ENCODE measurements at regions of chr9 and their contacts with region 1.

Region 1: DNA sequence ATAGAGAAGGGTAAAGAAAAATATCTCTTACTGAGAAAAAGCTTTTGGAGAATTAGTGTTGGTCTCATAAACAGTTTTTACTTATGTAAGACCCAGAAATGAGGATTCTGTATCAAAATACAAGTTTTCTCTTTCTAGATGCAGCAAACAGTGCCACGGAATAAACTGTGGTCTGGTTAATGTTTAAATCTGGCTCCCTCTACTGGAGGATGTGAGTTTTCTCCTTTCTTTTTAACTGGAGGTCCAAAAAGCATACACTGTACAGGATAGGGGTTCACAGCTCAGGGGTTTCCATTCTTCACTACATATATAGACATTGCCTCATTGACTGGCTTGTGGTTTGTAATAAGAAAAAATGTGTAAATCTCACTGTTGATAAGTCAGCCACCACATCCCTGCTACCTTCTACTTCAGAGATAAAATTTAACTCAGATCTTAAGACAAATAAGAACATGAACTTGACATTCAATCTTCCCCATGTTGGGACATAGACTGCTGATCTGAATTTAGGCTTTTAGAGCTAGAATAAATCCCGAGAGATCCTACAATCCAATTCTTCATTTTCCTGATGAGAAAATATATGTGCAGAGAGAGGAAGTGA is 98.9 kb downstream of the CFAP95 start:
- DNase-seq: no peak
- H3K4me3 ChIP-seq: no peak overlapping the region
- CTCF ChIP-seq: peak; percentile 54

Region 2: DNA sequence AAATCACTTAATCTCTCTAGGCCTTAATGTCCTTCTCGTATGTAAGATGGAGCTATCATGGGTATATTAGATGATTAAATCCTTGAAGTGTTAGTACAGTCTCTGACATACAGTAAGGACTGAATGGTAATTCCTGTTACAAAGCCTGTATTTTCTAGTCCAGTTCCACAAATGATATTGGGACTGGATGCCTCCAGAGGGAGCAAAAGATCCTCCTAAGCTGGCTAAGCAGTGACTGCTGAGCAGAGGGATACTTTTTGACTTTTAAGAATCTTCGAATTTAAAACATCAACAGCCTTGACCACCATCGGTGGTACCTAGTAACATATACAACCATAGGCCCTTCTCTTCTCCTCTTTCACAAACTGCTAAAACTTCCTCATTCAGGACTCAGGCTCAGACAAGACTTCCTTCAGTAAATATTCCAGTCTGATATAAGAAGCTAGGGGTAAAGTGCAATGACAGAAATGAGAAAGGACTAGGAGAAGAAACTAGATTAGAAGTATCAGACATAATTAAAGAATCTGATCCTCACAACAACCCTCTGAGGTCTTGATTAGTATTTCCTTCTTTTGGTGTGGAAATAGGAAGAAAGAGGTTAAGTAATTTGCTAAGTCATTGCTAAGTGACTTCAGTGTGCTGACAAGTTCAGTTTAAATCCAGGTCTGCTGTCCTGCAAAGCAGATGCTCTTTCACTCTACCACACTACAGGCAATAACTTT is 173.7 kb before region 1 on chr9:
- CTCF ChIA-PET with region 1: interaction called, 31 read pairs
- POLR2A ChIA-PET with region 1: no interaction called
- DNase-seq: no peak
- H3K4me3 ChIP-seq: no peak overlapping the region
- CTCF ChIP-seq: peak; percentile 15

Region 3: DNA sequence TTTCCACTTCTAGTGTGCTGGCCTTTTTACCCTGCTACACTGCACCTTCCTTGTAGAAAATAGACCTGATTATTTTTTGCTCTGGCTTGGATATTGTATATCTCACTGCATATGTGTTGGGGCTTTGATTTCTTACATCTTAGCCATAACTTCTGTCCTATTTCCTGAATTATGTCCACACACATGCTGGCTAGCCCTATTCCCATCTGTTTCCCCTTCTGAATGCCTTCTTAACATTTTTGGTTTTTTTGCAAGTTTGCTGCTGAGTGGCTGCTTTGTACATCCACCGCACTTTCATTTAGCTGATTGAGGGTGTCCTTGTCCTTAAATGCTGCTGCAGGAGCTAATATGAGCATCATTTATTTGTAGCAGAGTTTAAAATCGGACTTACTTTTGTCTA is 72.1 kb before region 1 on chr9:
- CTCF ChIA-PET with region 1: no interaction called
- POLR2A ChIA-PET with region 1: no interaction called
- DNase-seq: no peak
- H3K4me3 ChIP-seq: no peak overlapping the region
- CTCF ChIP-seq: no peak

Region 4: DNA sequence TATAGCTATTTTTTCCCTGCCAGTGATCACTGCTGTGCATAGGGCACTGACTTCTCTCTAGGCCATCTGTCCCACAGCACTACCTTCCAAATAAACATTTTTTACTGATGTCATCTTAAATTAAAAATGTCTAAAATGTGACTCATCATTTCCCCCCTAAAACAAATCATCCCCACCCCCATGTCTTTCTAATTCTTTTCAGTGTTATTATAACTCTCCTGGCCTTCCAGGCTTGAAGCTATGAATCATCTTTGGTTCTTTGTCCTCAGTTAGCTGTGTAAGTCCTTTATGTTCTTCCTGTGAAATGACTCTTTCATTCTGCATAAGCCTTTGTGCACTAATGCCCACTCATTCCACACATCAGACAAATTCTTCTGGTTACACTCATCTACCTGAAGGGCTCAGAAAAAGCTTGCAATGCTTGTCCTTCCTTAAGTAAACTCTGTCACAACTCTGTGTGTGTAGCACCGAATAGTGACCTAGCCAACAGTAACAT is 20.8 kb before region 1 on chr9:
- CTCF ChIA-PET with region 1: interaction called, 34 read pairs
- POLR2A ChIA-PET with region 1: no interaction called
- DNase-seq: no peak
- H3K4me3 ChIP-seq: no peak overlapping the region
- CTCF ChIP-seq: no peak

Region 5: DNA sequence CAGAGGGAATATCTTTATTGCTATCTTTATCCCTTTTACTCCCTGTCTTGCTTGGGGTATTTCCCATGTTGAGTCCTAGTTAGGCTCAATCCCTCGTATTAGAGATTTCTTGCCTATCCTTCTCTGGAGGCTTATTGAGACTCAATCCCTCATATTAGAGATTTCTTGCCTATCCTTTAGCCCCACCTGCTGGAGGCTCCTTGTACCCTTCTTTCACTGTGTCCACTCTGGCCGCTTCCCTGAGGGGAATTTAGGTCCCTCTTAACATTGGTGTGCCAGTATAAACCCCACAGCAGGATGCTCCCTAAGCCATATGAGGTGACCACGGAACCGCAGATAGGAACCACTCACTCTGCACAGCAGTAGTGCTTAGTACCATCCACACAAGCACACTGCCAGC is 13.3 kb after region 1 on chr9:
- CTCF ChIA-PET with region 1: interaction called, 73 read pairs
- POLR2A ChIA-PET with region 1: no interaction called
- DNase-seq: no peak
- H3K4me3 ChIP-seq: no peak overlapping the region
- CTCF ChIP-seq: no peak

Region 6: DNA sequence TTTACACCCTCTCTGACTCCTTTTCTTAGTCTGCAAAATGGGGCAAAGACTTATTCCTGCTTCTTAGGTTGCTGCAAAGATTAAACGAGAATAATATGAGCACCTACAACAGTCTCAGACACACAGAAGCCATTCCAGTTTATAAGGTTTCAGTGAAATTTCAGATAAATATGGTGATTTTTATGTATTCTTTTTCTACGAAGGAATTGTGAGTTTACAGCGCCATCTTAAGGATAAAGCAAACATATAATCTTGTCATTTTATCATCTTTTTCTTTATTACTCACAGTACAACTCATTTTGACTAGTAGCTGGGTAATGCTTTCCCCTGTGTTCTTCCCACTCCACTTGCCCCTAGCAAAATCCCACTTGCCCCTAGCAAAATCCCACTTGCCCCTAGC is 310.0 kb after region 1 on chr9:
- CTCF ChIA-PET with region 1: interaction called, 12 read pairs
- POLR2A ChIA-PET with region 1: no interaction called
- DNase-seq: no peak
- H3K4me3 ChIP-seq: no peak overlapping the region
- CTCF ChIP-seq: peak; percentile 35

Measured in AG04449 (cell line).